Tibial artery (tissue), 4 donors: ENCODE measurements at regions of chr17 and their contacts with region 1.

Region 1: GRCh38 chr17:45006927-45007461 is 38.9 kb upstream of the C1QL1 start:
- DNase-seq: no peak
- H3K4me3 ChIP-seq: no peak overlapping the region
- H3K27ac ChIP-seq: no peak overlapping the region
- H3K4me1 ChIP-seq: no peaks in the 10 kb centered on the region
- H3K27me3 ChIP-seq: peaks cover 0 to 16% of the 10 kb centered on the region in 2 donors
- CTCF ChIP-seq: no peak

Region 2: DNA sequence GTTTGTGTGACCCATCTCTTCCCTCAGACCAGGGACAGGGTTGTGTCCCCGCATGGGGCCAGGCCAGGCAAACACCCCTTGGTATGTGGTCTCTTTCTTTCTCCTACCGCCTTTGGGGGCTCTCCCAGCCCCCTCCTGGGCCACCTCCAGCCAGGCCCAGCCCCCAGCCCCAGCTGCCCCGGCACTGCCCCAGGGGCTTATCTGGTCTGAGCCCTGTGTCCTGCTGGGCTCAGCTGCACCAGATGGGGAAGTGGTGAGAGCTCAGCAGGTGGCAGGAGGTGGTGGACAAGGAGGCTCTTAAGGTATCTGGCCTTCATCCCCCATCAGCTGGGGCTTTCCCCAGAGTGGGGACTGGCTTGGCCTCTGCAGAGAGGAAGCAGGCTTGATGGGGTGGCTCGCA is 239.5 kb before region 1 on chr17:
- intact Hi-C with region 1: loop called (anchors 10 kb)
- DNase-seq: no peak
- H3K4me3 ChIP-seq: no peak overlapping the region
- H3K27ac ChIP-seq: no peak overlapping the region
- H3K4me1 ChIP-seq: no peaks in the 10 kb centered on the region
- H3K27me3 ChIP-seq: peaks cover 0 to 83% of the 10 kb centered on the region in 2 donors
- CTCF ChIP-seq: no peak

Region 3: GRCh38 chr17:44919885-44920564 is 87.0 kb before region 1 on chr17:
- intact Hi-C with region 1: no loop called
- DNase-seq: peak; percentile 86 to 87
- H3K4me3 ChIP-seq: no peak overlapping the region
- H3K27ac ChIP-seq: no peak overlapping the region
- H3K4me1 ChIP-seq: peaks cover 0 to 19% (median 12%) of the 10 kb centered on the region in 4 donors
- H3K27me3 ChIP-seq: no peaks in the 10 kb centered on the region
- CTCF ChIP-seq: peak; percentile 81 to 93

Region 4: GRCh38 chr17:44947461-44948314 is 59.3 kb before region 1 on chr17 and contains the start of gene KIF18B:
- intact Hi-C with region 1: no loop called
- DNase-seq: peak; percentile 88 to 92
- H3K4me3 ChIP-seq: peak within 1 kb of the TSS; percentile 53 to 57
- H3K27ac ChIP-seq: peak within 1 kb of the TSS in 1 of 2 donors; percentile 45
- H3K4me1 ChIP-seq: peaks cover 0 to 12% (median 9%) of the 10 kb centered on the region in 4 donors
- H3K27me3 ChIP-seq: peaks cover 0 to 14% of the 10 kb centered on the region in 2 donors
- CTCF ChIP-seq: no peak

Region 5: GRCh38 chr17:45110668-45111611 is 103.9 kb after region 1 on chr17:
- intact Hi-C with region 1: no loop called
- DNase-seq: peak; percentile 63 to 91
- H3K4me3 ChIP-seq: no peak overlapping the region
- H3K27ac ChIP-seq: peak overlapping the region; percentile 87 to 91
- H3K4me1 ChIP-seq: peaks cover 4 to 75% (median 43%) of the 10 kb centered on the region in 4 donors
- H3K27me3 ChIP-seq: no peaks in the 10 kb centered on the region
- CTCF ChIP-seq: peak in 1 of 2 experiments; percentile 41